Activated B cell treated with CpG ODN at 0.5 μM for 24 hours (primary cell): ENCODE measurements at regions of chr16 and their contacts with region 1.

Region 1: GRCh38 chr16:10876799-10877341 is at the start of gene CIITA:
- DNase-seq: peak; percentile 62
- ATAC-seq: peak; percentile 71
- H3K4me3 Mint-ChIP-seq: peak within 1 kb of the TSS; percentile 100
- H3K27ac Mint-ChIP-seq: peak within 1 kb of the TSS; percentile 90
- H3K4me1 Mint-ChIP-seq: peaks cover 70% of the 10 kb centered on the region
- H3K27me3 Mint-ChIP-seq: no peaks in the 10 kb centered on the region
- CTCF ChIP-seq: no peak
- total RNA-seq, gene CIITA: 332 and 401 TPM in 2 replicates

Region 2: GRCh38 chr16:10362077-10362863 is 514.6 kb before region 1 on chr16:
- CTCF ChIA-PET with region 1: no interaction called
- POLR2A ChIA-PET with region 1: no interaction called
- intact Hi-C with region 1: no loop called
- DNase-seq: no peak
- ATAC-seq: peak; percentile 84
- H3K4me3 Mint-ChIP-seq: peak overlapping the region; percentile 56
- H3K27ac Mint-ChIP-seq: peak overlapping the region; percentile 50
- H3K4me1 Mint-ChIP-seq: peaks cover 15% of the 10 kb centered on the region
- H3K27me3 Mint-ChIP-seq: no peaks in the 10 kb centered on the region
- CTCF ChIP-seq: no peak

Region 3: DNA sequence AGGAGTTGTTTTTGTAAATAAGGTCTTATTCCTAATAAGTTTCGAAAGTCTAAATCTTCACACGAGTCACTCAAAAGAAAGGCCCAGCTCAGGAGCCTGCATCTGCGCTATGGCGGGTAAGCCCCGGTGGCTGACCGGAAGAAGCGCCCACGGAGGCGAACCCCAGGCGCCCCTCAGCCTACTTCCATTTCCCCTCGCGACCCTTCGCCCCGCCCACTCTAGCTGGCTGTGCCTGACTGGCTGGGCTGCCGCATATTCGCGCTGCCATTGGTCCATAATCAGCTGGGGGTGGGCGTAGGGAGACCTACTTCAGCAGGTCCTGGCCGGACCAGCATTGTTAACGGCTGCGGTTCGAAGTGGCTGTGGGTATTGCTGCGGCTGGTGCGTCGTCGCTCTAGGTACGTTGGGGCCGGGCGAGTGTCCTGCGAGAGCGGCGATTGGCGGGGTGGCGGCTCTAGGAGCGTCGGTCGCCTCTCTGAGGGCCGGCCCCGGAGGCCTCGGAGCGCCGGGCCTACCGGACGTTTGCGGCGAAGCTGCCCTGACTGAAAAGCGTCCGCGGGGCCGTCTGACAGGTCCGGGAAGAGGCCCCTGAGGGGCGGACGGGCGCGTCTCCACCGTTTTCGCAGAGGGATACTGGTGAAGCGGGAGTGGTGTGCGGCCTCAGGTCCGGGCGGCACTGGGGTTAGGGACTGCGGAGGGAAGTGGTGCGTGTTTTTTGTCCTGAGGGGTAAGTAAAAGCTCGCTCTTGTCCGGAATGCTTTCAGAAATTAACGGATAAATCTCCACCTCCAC is 490.9 kb before region 1 on chr16 and contains the start of gene ATF7IP2:
- CTCF ChIA-PET with region 1: no interaction called
- POLR2A ChIA-PET with region 1: no interaction called
- intact Hi-C with region 1: loop called (anchors 10 kb)
- DNase-seq: peak; percentile 86
- ATAC-seq: peak; percentile 99
- H3K4me3 Mint-ChIP-seq: peak within 1 kb of the TSS; percentile 99
- H3K27ac Mint-ChIP-seq: peak within 1 kb of the TSS; percentile 96
- H3K4me1 Mint-ChIP-seq: peaks cover 49% of the 10 kb centered on the region
- H3K27me3 Mint-ChIP-seq: no peaks in the 10 kb centered on the region
- CTCF ChIP-seq: no peak
- total RNA-seq, gene ATF7IP2: 48.6 and 55.9 TPM in 2 replicates

Region 4: GRCh38 chr16:10752843-10753523 is 123.9 kb before region 1 on chr16:
- CTCF ChIA-PET with region 1: interaction called, 8 read pairs
- POLR2A ChIA-PET with region 1: interaction called, 58 read pairs
- intact Hi-C with region 1: loop called (anchors 1 kb)
- DNase-seq: peak; percentile 53
- ATAC-seq: peak; percentile 86
- H3K4me3 Mint-ChIP-seq: peak overlapping the region; percentile 63
- H3K27ac Mint-ChIP-seq: peak overlapping the region; percentile 77
- H3K4me1 Mint-ChIP-seq: peaks cover 61% of the 10 kb centered on the region
- H3K27me3 Mint-ChIP-seq: no peaks in the 10 kb centered on the region
- CTCF ChIP-seq: no peak

Region 5: GRCh38 chr16:10812312-10813098 is 64.4 kb before region 1 on chr16:
- CTCF ChIA-PET with region 1: interaction called, 7 read pairs
- POLR2A ChIA-PET with region 1: interaction called, 34 read pairs
- intact Hi-C with region 1: loop called (anchors 1 kb)
- DNase-seq: no peak
- ATAC-seq: peak; percentile 70
- H3K4me3 Mint-ChIP-seq: peak overlapping the region; percentile 49
- H3K27ac Mint-ChIP-seq: peak overlapping the region; percentile 62
- H3K4me1 Mint-ChIP-seq: peaks cover 63% of the 10 kb centered on the region
- H3K27me3 Mint-ChIP-seq: no peaks in the 10 kb centered on the region
- CTCF ChIP-seq: no peak

Region 6: GRCh38 chr16:10895053-10895946 is 18.4 kb after region 1 on chr16:
- CTCF ChIA-PET with region 1: interaction called, 76 read pairs
- POLR2A ChIA-PET with region 1: interaction called, 318 read pairs
- intact Hi-C with region 1: loop called (anchors 1 kb)
- DNase-seq: peak; percentile 60
- ATAC-seq: no peak
- H3K4me3 Mint-ChIP-seq: peak overlapping the region; percentile 67
- H3K27ac Mint-ChIP-seq: peak overlapping the region; percentile 91
- H3K4me1 Mint-ChIP-seq: peaks cover 99% of the 10 kb centered on the region
- H3K27me3 Mint-ChIP-seq: no peaks in the 10 kb centered on the region
- CTCF ChIP-seq: no peak

Region 7: DNA sequence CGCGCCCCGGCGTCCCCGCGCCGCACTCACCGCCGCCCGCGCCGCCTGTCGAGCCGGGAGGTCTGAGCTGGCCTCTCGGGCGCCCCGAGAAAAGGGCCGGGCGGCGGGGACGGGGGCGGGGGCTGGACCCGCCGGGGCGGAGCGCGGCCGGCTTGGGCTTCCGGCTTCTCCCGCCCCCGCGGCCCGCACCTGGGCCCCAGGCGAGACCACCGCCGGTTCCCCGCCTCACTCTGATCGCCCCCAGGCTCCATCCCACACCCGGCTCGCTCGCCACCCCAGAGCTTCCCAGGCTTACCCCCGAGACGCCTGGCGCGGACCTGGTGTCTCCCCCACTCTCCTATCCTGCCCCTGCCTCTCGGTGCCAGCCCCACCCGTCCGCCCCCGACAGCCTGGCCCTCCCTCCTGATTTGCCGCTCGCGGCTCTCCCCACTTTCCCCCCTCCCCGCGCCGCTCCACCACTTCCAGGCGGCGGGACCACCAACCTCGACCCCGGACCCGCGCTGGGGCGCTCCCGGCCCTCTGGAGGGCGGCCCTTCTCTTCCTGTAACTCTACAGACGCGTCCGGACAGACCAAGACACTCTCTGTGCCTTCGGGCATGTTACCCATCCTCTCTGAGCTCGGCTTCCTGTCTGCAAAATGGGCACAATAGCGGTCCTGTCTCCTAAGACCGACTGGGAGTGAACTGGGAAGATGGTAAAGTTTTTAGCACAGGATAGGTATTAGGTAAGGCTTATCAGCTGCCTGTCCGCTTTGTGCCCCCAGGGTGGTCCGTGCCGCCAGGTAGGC is 710.2 kb after region 1 on chr16 and contains the start of gene LITAF:
- CTCF ChIA-PET with region 1: no interaction called
- POLR2A ChIA-PET with region 1: no interaction called
- intact Hi-C with region 1: loop called (anchors 10 kb)
- DNase-seq: peak; percentile 71
- ATAC-seq: peak; percentile 60
- H3K4me3 Mint-ChIP-seq: peak within 1 kb of the TSS; percentile 91
- H3K27ac Mint-ChIP-seq: peak within 1 kb of the TSS; percentile 94
- H3K4me1 Mint-ChIP-seq: peaks cover 48% of the 10 kb centered on the region
- H3K27me3 Mint-ChIP-seq: no peaks in the 10 kb centered on the region
- CTCF ChIP-seq: no peak
- total RNA-seq, gene LITAF: 124 and 126 TPM in 2 replicates